H1 (cell line): ENCODE measurements at regions of chr15 and their contacts with region 1.

Region 1: GRCh38 chr15:40044717-40045571 is 6.0 kb upstream of the SRP14 start:
- DNase-seq: peak in 1 of 2 experiments; percentile 86
- H3K4me3 ChIP-seq: peak overlapping the region in 1 of 4 experiments; percentile 46; a peak in 2 of 8 replicates
- H3K27ac ChIP-seq: no peak overlapping the region
- H3K4me1 ChIP-seq: peaks cover 0 to 11% (median 6%) of the 10 kb centered on the region in 4 experiments; a peak in 6 of 7 replicates
- H3K27me3 ChIP-seq: no peaks in the 10 kb centered on the region
- CTCF ChIP-seq: peak; percentile 92 to 97 (median 97)
- EP300 ChIP-seq: no peak
- POLR2A ChIP-seq: no peak
- RAD21 ChIP-seq: peak; percentile 98 to 99

Region 2: GRCh38 chr15:39963786-39964185 is 81.2 kb before region 1 on chr15:
- CTCF ChIA-PET with region 1: no interaction called
- POLR2A ChIA-PET with region 1: no interaction called
- DNase-seq: no peak
- H3K4me3 ChIP-seq: no peak overlapping the region
- H3K27ac ChIP-seq: no peak overlapping the region
- H3K4me1 ChIP-seq: 0 out of 7 replicates have a peak, but pooled peaks cover 0 to 4% (median 0%) of the 10 kb centered on the region in 4 experiments
- H3K27me3 ChIP-seq: no peaks in the 10 kb centered on the region
- CTCF ChIP-seq: no peak
- EP300 ChIP-seq: no peak
- POLR2A ChIP-seq: no peak
- RAD21 ChIP-seq: no peak

Region 3: DNA sequence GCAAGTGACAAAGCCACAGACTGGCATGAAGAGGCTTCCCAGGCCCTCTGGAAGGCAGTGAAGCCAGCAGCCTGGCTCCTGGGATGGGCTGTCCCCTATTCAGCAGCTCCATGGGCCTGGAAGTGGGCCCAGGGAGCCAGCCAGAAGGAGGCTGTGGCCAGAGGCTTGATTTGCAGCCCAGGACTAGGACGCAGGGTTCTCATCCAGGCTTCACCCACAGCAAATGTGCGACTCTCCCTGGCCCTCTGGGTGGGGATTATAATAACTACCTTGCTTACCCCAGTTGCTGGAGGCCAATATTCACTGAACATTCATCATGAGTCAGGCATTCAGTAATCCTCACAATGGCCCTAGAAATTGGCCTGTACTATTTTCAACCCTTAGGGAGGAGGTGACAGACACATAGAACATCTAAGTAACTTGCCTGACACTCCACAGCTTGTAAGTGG is 18.6 kb after region 1 on chr15:
- CTCF ChIA-PET with region 1: interaction called, 11 read pairs
- POLR2A ChIA-PET with region 1: interaction called, 15 read pairs
- DNase-seq: no peak
- H3K4me3 ChIP-seq: no peak overlapping the region
- H3K27ac ChIP-seq: no peak overlapping the region
- H3K4me1 ChIP-seq: peaks cover 0 to 9% (median 0%) of the 10 kb centered on the region in 4 experiments; a peak in 3 of 7 replicates
- H3K27me3 ChIP-seq: peaks cover 0 to 2% (median 0%) of the 10 kb centered on the region in 4 experiments; a peak in 1 of 7 replicates
- CTCF ChIP-seq: no peak
- EP300 ChIP-seq: no peak
- POLR2A ChIP-seq: no peak
- RAD21 ChIP-seq: no peak

Region 4: DNA sequence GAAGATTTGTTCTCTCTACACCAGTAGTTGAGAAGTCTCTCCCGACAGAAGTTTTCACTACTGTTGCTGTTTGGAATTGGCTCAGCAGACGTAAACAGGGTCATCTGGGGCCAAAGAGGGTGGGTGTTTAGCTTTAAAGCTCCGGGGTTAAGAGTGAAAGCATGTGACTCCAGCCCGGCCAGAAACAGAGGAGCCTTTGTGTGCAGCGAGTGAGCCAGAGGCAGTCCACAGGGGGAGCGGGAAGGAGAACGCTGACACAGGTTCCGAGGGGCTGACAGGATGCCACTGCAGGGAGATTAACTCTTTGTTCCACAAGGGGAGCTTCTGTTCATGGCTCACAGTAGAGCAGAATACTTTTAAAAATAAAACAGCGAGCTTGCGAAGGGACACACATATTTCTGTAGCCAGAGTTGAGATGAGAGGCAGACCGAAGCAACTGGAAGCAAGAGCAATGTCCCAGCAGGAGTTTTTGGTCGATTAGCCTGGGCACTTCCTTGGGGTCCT is 36.8 kb after region 1 on chr15:
- CTCF ChIA-PET with region 1: interaction called, 10 read pairs
- POLR2A ChIA-PET with region 1: interaction called, 4 read pairs
- DNase-seq: no peak
- H3K4me3 ChIP-seq: peak overlapping the region in 3 of 4 experiments; percentile 8 to 42 (median 23); a peak in 3 of 8 replicates
- H3K27ac ChIP-seq: no peak overlapping the region
- H3K4me1 ChIP-seq: peaks cover 0 to 11% (median 8%) of the 10 kb centered on the region in 4 experiments; a peak in 6 of 7 replicates
- H3K27me3 ChIP-seq: peaks cover 0 to 12% (median 7%) of the 10 kb centered on the region in 4 experiments; a peak in 4 of 7 replicates
- CTCF ChIP-seq: peak in 1 of 3 experiments; percentile 10; a peak in 1 of 4 replicates
- EP300 ChIP-seq: no peak
- POLR2A ChIP-seq: no peak; a peak in 1 of 3 replicates
- RAD21 ChIP-seq: peak in 1 of 2 experiments; percentile 22; a peak in 1 of 4 replicates

Region 5: DNA sequence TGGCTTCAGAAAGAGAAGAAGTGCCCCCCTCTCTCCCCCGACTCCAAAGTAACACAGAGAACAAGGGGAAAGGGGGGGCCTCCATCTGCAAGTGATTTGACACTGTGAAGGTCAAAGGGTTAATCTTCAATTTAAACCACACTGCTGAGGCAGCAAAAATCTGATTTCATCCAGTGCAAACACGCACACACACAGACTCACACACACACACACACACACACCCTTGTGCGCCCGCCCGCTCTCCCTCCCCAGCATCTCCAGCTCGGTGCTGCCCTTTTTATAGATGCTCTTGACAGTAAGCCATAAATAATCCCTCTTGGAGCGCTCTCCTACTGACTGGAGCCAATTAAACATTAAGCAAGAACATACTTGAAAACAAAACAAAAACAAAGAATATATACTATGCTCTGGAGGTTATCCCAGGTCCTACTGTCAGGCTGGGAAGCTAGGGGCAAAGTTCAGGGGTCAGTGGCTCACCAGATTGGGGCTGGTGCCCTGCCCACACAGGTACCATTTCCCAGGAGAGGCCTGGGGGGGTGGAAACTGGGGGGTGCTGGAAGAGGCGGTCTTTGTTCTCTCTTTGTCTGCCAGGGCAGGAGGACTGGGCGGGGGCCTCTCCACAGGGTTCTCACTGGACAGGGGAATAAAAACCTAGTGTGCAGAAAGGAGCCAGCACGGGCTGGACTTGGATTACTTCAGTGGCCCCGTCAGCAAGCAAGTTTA is 47.5 kb after region 1 on chr15:
- CTCF ChIA-PET with region 1: interaction called, 406 read pairs
- POLR2A ChIA-PET with region 1: interaction called, 4 read pairs
- DNase-seq: no peak
- H3K4me3 ChIP-seq: peak overlapping the region in 1 of 4 experiments; percentile 26; a peak in 2 of 8 replicates
- H3K27ac ChIP-seq: peak overlapping the region; percentile 36; the same call in 1 of the 2 replicates
- H3K4me1 ChIP-seq: peaks cover 22 to 67% (median 46%) of the 10 kb centered on the region in 4 experiments
- H3K27me3 ChIP-seq: no peaks in the 10 kb centered on the region
- CTCF ChIP-seq: no peak
- EP300 ChIP-seq: no peak
- POLR2A ChIP-seq: no peak
- RAD21 ChIP-seq: no peak

Region 6: DNA sequence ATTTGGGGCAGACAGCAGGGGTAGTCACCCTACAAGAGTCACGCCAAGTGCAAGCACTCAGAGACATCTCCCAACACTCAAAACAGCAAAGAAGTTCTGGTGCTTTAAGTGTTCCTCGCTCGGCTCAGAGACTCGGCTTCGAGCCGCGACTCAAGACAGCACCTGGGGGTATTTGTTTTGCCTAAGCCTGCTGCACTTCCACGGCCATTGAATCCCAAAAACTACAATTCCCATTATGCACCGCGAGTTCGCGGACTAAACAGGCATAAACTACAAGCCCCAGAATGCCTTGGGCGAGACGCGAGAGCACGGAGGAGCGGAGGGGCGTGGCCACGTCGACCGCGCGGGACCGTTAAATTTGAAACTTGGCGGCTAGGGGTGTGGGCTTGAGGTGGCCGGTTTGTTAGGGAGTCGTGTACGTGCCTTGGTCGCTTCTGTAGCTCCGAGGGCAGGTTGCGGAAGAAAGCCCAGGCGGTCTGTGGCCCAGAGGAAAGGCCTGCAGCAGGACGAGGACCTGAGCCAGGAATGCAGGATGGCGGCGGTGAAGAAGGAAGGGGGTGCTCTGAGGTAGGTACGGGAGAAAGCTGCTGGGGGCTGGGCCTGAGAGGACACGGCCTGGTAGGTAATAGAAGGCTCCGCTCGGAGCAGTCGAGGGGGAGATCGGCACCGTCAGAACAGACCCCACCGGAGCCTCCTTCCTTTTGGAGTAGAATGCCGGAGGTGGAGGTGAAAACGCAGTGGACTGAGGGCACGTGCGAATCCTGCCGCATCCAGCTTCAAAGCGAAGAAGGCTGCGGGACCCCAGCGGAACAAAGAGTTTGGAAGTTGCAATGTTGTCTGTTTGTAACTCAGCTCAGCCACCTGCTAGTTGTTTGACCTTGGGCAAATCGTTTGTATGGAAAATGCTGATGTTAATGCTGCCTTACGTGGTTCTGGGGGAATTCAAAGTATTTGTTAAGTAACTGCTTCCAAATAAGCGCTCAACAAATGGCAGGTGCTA is 116.0 kb after region 1 on chr15 and contains the start of gene BUB1B:
- CTCF ChIA-PET with region 1: interaction called, 52 read pairs
- POLR2A ChIA-PET with region 1: interaction called, 11 read pairs
- DNase-seq: peak; percentile 83 to 95
- H3K4me3 ChIP-seq: peak within 1 kb of the TSS; percentile 85 to 97 (median 91)
- H3K27ac ChIP-seq: peak within 1 kb of the TSS; percentile 91
- H3K4me1 ChIP-seq: peaks cover 10 to 19% (median 14%) of the 10 kb centered on the region in 4 experiments
- H3K27me3 ChIP-seq: no peaks in the 10 kb centered on the region
- CTCF ChIP-seq: no peak
- EP300 ChIP-seq: no peak
- POLR2A ChIP-seq: peak; percentile 64 to 90
- RAD21 ChIP-seq: peak in 1 of 2 experiments; percentile 3; a peak in 2 of 4 replicates
- total RNA-seq, gene BUB1B: 144 and 153 TPM in 2 replicates